GM12878 (cell line): ENCODE measurements at regions of chr13 and their contacts with region 1.

Region 1: DNA sequence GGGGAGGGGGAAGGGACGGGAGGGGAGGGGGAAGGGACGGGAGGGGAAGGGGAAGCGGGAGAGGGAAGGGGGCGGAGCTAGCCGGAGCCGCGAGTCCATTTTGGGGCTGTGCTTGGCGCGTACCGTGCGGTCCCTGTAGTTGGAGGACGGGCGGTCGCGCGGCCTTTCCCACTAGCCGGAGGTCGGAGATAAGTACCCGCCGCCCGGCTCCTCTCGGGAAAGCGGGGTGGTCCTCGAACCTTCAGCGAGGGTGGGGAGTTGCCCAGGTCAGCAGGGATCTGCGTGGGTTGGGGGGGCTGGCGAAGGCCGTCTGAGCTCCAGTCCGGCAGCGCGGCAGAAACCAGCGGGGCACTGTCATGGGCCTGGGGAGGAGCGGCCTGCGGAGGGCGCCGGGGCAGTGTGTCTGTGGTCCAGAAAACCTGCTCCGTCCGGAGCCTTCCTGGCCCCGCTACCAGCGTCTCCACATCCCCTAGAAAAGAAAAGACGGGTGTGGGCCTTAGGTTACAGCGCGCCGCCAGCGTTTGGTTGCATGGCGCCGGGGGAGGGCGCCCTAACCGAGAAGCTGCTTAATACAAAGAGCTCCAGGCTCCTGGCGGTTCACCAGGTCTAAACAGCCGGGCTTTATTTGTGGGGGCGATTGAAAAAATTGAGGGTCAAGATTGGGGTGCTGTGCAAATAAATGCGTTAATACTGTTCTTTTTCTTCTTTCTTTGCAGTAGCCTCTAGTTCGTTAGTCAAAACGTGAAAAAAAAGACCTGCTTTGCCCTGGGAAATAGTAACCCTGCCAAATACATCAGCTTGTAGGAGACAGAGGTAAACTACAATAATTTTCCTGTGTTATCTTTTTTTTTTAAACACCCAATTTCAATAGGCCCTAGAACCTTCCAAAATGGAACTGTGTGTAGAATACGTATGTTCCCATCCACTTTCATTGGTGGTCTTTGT is at the start of gene TRIM13:
- DNase-seq: peak; percentile 48
- ATAC-seq: peak; percentile 84
- H3K4me3 ChIP-seq: peak within 1 kb of the TSS; percentile 92
- H3K27ac ChIP-seq: peak within 1 kb of the TSS; percentile 96
- H3K4me1 ChIP-seq: peaks cover 12% of the 10 kb centered on the region
- H3K27me3 ChIP-seq: no peaks in the 10 kb centered on the region
- CTCF ChIP-seq: peak; percentile 80 to 87 (median 81)
- EP300 ChIP-seq: 0 out of 4 replicates have a peak, but pooled peaks of 1 of the 2 experiments have one; percentile 26
- POLR2A ChIP-seq: peak; percentile 91
- RAD21 ChIP-seq: peak; percentile 68
- polyA plus RNA-seq, gene TRIM13: 25.7 to 33.8 TPM

Region 2: DNA sequence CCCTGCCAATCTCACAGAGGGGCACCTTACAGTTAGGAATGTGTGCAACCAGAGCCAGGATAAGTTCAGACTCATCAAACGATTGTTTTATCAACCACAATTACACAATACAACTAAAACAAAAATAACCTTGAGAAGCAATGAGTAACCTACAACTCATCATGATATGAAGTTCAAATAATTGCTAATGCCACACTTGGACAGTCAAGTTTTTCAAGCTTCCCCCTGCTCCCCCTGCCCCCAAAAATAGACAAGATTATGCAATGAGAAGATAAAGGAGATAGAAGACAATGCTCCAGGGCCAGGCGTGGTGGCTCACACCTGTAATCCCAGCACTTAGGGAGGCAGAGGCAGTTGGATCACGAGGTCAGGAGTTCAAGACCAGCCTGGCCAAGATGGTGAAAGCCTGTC is 191.1 kb before region 1 on chr13:
- CTCF ChIA-PET with region 1: no interaction called
- POLR2A ChIA-PET with region 1: no interaction called
- RAD21 ChIA-PET with region 1: no interaction called
- SMC1A ChIA-PET with region 1: no interaction called
- in situ Hi-C with region 1: no loop called
- intact Hi-C with region 1: no loop called
- DNase-seq: no peak
- ATAC-seq: no peak
- H3K4me3 ChIP-seq: no peak overlapping the region
- H3K27ac ChIP-seq: no peak overlapping the region
- H3K4me1 ChIP-seq: no peaks in the 10 kb centered on the region
- H3K27me3 ChIP-seq: no peaks in the 10 kb centered on the region; a peak in 1 of 4 replicates
- CTCF ChIP-seq: no peak
- EP300 ChIP-seq: no peak
- POLR2A ChIP-seq: no peak
- RAD21 ChIP-seq: no peak

Region 3: GRCh38 chr13:49936085-49936940 is 60.9 kb before region 1 on chr13 and contains the start of gene SPRYD7:
- CTCF ChIA-PET with region 1: interaction called, 10 read pairs
- POLR2A ChIA-PET with region 1: interaction called, 20 read pairs
- RAD21 ChIA-PET with region 1: interaction called, 6 read pairs
- SMC1A ChIA-PET with region 1: interaction called, 3 read pairs
- in situ Hi-C with region 1: no loop called
- intact Hi-C with region 1: loop called (anchors 2 kb)
- DNase-seq: peak; percentile 90
- ATAC-seq: peak; percentile 97
- H3K4me3 ChIP-seq: peak within 1 kb of the TSS; percentile 82
- H3K27ac ChIP-seq: peak within 1 kb of the TSS; percentile 58
- H3K4me1 ChIP-seq: 0 out of 2 replicates have a peak, but pooled peaks cover 2% of the 10 kb centered on the region
- H3K27me3 ChIP-seq: no peaks in the 10 kb centered on the region
- CTCF ChIP-seq: peak; percentile 96 to 97 (median 96)
- EP300 ChIP-seq: 0 out of 4 replicates have a peak, but pooled peaks of 1 of the 2 experiments have one; percentile 2
- POLR2A ChIP-seq: peak; percentile 91
- RAD21 ChIP-seq: peak; percentile 56
- polyA plus RNA-seq, gene SPRYD7: 12.9 to 13.0 TPM

Region 4: DNA sequence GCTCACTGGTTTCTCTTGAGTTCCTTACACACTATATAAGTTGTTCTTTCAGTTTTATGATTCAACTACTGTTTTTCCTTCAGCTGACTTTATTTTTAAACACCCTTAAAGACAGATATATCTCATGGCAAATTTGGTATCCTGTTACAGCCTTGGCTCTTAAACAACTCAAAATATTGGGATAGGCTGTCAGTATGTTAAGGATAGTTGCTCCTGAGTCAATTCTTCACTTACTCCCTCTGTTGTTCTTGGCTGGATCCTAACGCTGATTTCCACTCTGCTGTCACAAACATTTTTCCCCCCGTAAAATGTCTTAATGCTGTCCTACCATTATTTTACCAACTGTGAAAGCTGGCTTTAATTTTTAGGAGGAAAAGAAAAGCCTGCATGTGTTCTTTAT is 19.2 kb after region 1 on chr13:
- CTCF ChIA-PET with region 1: interaction called, 5 read pairs
- POLR2A ChIA-PET with region 1: no interaction called
- RAD21 ChIA-PET with region 1: interaction called, 3 read pairs
- SMC1A ChIA-PET with region 1: interaction called, 10 read pairs
- in situ Hi-C with region 1: no loop called
- intact Hi-C with region 1: no loop called
- DNase-seq: no peak
- ATAC-seq: no peak
- H3K4me3 ChIP-seq: no peak overlapping the region
- H3K27ac ChIP-seq: no peak overlapping the region
- H3K4me1 ChIP-seq: no peaks in the 10 kb centered on the region
- H3K27me3 ChIP-seq: no peaks in the 10 kb centered on the region
- CTCF ChIP-seq: no peak
- EP300 ChIP-seq: no peak
- POLR2A ChIP-seq: no peak
- RAD21 ChIP-seq: no peak

Region 5: GRCh38 chr13:50069261-50069660 is 72.0 kb after region 1 on chr13:
- CTCF ChIA-PET with region 1: interaction called, 159 read pairs
- POLR2A ChIA-PET with region 1: no interaction called
- RAD21 ChIA-PET with region 1: interaction called, 7 read pairs
- SMC1A ChIA-PET with region 1: interaction called, 38 read pairs
- in situ Hi-C with region 1: no loop called
- intact Hi-C with region 1: no loop called
- DNase-seq: no peak
- ATAC-seq: no peak
- H3K4me3 ChIP-seq: no peak overlapping the region
- H3K27ac ChIP-seq: no peak overlapping the region
- H3K4me1 ChIP-seq: peaks cover 8% of the 10 kb centered on the region; the same call in 1 of the 2 replicates
- H3K27me3 ChIP-seq: no peaks in the 10 kb centered on the region
- CTCF ChIP-seq: no peak
- EP300 ChIP-seq: no peak
- POLR2A ChIP-seq: no peak
- RAD21 ChIP-seq: no peak

Region 6: DNA sequence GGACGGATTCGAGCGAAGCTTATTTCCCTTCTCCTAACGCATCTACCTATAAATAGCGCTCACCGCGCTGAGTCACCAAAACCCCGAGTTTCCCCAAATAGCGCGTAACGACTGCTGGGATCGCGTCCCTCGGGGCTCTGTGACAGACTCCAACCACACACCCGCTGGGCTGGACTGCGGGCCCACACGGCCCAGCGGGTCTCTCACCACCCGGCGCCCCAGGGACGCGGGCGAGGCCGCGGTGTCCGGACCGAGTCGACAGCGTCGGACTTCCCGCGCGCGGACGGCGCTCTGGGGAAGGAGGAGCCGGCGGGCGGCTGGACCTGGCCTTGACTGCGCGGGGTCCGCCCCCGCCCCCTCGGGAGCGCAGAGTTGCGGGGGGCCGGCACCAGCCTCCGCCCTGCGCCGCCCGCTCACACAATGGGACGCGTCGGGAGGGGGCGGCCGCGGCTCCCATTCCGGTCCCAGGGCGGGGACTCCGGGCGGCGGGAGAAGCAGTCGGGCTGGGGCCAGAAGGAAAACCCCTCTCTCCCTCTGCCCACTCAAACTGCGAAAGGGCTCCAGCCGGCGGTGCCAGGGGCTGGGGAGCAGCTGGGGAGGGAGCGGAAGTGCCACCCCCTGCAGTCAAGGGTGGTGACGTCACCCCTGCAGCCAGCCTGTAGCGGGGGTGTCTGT is 126.8 kb after region 1 on chr13:
- CTCF ChIA-PET with region 1: interaction called, 4 read pairs
- POLR2A ChIA-PET with region 1: interaction called, 6 read pairs
- RAD21 ChIA-PET with region 1: interaction called, 3 read pairs
- SMC1A ChIA-PET with region 1: no interaction called
- in situ Hi-C with region 1: no loop called
- intact Hi-C with region 1: loop called (anchors 2 kb)
- DNase-seq: no peak
- ATAC-seq: peak; percentile 80
- H3K4me3 ChIP-seq: peak overlapping the region; percentile 62
- H3K27ac ChIP-seq: no peak overlapping the region
- H3K4me1 ChIP-seq: peaks cover 30% of the 10 kb centered on the region
- H3K27me3 ChIP-seq: peaks cover 5 to 7% of the 10 kb centered on the region in 2 experiments; a peak in 3 of 4 replicates
- CTCF ChIP-seq: peak in 1 of 3 experiments; percentile 10; a peak in 1 of 6 replicates
- EP300 ChIP-seq: no peak
- POLR2A ChIP-seq: peak; percentile 65
- RAD21 ChIP-seq: no peak